ENCODE measurements at regions of chr2 and their contacts with region 1.

Region 1: GRCh38 chr2:42086500-42086953 is 38.7 kb downstream of the PKDCC start:
- DNase-seq: peak in 2 of 5 donors; percentile 22 to 48
- H3K4me3 ChIP-seq: no peak overlapping the region
- H3K4me3 Mint-ChIP-seq: no peak overlapping the region
- H3K27ac ChIP-seq: no peak overlapping the region
- H3K27ac Mint-ChIP-seq: peak overlapping the region in 1 of 8 donors; percentile 53
- H3K4me1 ChIP-seq: no peaks in the 10 kb centered on the region
- H3K4me1 Mint-ChIP-seq: peaks cover 15 to 24% (median 19%) of the 10 kb centered on the region in 3 donors
- H3K27me3 ChIP-seq: no peaks in the 10 kb centered on the region
- H3K27me3 Mint-ChIP-seq: peaks cover 6 to 16% of the 10 kb centered on the region in 2 donors

Region 2: DNA sequence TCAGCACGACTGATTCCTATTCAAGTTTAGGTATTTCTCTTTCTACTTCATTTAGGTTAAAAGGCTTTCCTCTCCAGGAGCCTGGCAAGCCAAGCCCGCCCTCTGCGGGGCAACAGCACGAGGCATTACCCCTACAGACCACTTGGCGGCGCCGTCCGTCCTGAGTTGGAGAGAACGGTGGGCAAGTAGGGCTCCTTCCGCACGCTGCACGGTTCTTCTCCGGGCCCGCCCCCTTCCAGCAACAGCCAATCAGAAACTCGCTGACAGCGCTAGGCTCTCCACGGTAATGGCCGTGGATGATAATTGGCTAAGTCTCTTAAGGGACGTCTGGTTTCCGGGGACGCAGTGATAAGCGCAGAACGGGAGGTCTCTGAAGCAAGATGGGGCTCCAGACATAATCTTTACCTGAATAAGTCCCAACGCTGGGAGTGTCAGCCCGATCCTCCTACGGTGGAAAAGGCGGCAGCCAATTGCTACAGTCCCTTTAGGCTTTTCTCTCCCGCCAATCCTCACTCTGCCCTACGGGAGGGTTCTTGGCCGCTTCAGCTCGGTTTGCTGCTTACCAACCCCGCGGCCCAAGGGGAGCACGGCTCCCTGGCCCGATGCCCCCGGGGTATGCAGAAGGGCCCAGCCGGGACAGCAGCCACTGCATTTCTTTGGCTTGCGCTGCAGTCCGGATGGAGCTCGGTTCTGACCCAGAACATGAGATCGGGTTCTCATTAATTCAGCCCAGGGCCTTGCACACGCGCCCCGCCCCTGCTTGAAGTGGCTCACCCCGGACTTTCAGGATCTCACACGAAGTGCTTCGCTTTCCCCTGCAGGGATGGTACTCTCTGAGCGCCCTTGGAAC is 245.6 kb before region 1 on chr2:
- CTCF ChIA-PET with region 1: interaction called, 29 read pairs
- POLR2A ChIA-PET with region 1: no interaction called
- DNase-seq: peak; percentile 95 to 98 (median 97)
- H3K4me3 ChIP-seq: peak overlapping the region; percentile 98
- H3K4me3 Mint-ChIP-seq: peak overlapping the region; percentile 90 to 99 (median 94)
- H3K27ac ChIP-seq: peak overlapping the region; percentile 73
- H3K27ac Mint-ChIP-seq: peak overlapping the region; percentile 37 to 97 (median 95)
- H3K4me1 ChIP-seq: peaks cover 12% of the 10 kb centered on the region
- H3K4me1 Mint-ChIP-seq: peaks cover 9 to 15% (median 12%) of the 10 kb centered on the region in 3 donors
- H3K27me3 ChIP-seq: no peaks in the 10 kb centered on the region
- H3K27me3 Mint-ChIP-seq: peaks cover 14 to 41% of the 10 kb centered on the region in 2 donors

Region 3: GRCh38 chr2:41853427-41854216 is 232.9 kb before region 1 on chr2:
- CTCF ChIA-PET with region 1: interaction called, 53 read pairs
- POLR2A ChIA-PET with region 1: no interaction called
- DNase-seq: no peak
- H3K4me3 ChIP-seq: no peak overlapping the region
- H3K4me3 Mint-ChIP-seq: no peak overlapping the region
- H3K27ac ChIP-seq: no peak overlapping the region
- H3K27ac Mint-ChIP-seq: no peak overlapping the region
- H3K4me1 ChIP-seq: no peaks in the 10 kb centered on the region
- H3K4me1 Mint-ChIP-seq: no peaks in the 10 kb centered on the region
- H3K27me3 ChIP-seq: no peaks in the 10 kb centered on the region
- H3K27me3 Mint-ChIP-seq: peaks cover 20 to 22% of the 10 kb centered on the region in 2 donors

Region 4: GRCh38 chr2:41869542-41870264 is 216.8 kb before region 1 on chr2:
- CTCF ChIA-PET with region 1: interaction called, 185 read pairs
- POLR2A ChIA-PET with region 1: no interaction called
- DNase-seq: peak; percentile 49 to 74 (median 68)
- H3K4me3 ChIP-seq: no peak overlapping the region
- H3K4me3 Mint-ChIP-seq: no peak overlapping the region
- H3K27ac ChIP-seq: no peak overlapping the region
- H3K27ac Mint-ChIP-seq: peak overlapping the region in 1 of 8 donors; percentile 14
- H3K4me1 ChIP-seq: no peaks in the 10 kb centered on the region
- H3K4me1 Mint-ChIP-seq: peaks cover 34 to 61% (median 38%) of the 10 kb centered on the region in 3 donors
- H3K27me3 ChIP-seq: no peaks in the 10 kb centered on the region
- H3K27me3 Mint-ChIP-seq: peaks cover 3 to 7% of the 10 kb centered on the region in 2 donors

Region 5: DNA sequence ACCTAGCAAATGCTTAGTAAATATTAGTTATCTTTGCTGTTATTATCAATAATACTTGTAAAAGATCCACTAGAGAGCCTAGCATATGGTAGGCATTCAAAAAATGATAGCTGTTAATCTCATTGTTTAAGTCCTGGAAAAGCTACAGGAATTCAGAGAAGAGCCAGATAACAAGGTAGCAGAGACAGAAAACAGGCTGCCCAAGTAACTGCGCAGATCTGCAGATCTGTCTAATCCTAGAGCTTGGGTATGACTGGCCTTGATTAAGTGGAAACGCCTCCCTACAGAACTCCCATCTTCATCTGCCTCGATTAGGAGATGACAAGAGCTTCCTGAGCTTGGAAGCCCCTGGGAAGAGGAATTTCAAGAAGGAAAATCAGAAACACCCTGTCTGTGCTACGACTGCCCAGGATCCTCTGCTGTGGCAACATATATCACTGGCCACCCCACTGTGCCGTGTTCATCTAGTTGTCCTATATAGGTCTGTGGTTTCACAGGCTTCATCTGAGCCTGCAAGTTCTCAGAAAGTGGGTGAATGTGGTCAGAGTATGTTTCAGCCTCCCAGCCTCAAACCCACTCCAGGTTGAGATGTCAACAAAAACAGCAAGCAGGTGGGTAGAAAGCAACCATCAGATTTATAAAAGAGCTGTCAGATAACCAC is 190.2 kb before region 1 on chr2:
- CTCF ChIA-PET with region 1: interaction called, 11 read pairs
- POLR2A ChIA-PET with region 1: no interaction called
- DNase-seq: peak in 4 of 5 donors; percentile 12 to 79 (median 48)
- H3K4me3 ChIP-seq: no peak overlapping the region
- H3K4me3 Mint-ChIP-seq: peak overlapping the region; percentile 3 to 87 (median 71)
- H3K27ac ChIP-seq: no peak overlapping the region
- H3K27ac Mint-ChIP-seq: peak overlapping the region; percentile 80 to 97 (median 88)
- H3K4me1 ChIP-seq: peaks cover 27% of the 10 kb centered on the region
- H3K4me1 Mint-ChIP-seq: peaks cover 54 to 63% (median 55%) of the 10 kb centered on the region in 3 donors
- H3K27me3 ChIP-seq: no peaks in the 10 kb centered on the region
- H3K27me3 Mint-ChIP-seq: peaks cover 0 to under 1% of the 10 kb centered on the region in 2 donors

Measured in CD8-positive, alpha-beta memory T cell (primary cell).